GM18951 (cell line): ENCODE measurements at regions of chr13 and their contacts with region 1.

Region 1: GRCh38 chr13:49996951-49997895 is at the start of gene TRIM13:
- POLR2A ChIP-seq: peak; percentile 79

Region 2: DNA sequence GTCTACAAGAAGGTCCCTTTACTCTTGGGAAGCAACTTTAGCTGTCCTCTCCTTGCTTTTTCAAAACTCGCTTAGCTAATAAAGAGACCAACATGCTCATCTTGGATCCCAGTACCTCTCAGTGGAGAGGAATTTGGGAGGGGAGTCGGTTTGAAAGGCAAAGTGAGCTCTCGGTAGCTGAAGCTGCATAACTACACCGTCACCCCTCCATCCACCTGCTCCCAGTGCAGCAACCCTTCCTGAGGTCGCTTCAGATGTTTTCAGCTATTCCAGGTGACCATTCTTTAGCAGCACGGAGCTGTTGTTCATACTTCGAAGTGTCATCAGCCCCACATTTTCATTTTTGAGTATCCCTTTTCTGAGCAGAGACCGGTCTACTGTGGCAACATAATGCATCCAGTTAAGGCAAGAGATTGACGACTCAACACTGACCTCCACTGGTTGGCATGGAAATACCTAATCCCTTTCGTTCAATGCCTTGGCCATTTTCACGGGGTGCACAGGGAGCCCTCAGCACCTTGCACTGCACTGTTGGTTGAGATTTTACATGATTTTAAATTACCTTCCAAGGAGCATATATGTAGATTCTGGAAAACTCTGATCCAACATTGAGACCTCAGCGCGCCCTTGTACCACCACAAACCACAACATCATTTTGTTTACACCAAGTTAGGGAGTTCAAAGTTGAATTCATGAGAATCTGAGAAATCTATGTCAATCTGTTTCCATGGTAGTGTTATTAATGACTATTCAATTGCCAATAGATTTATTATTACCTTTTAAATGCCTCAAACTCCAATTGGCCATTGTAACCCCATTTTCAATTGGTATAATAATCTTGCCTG is 804.1 kb after region 1 on chr13:
- in situ Hi-C with region 1: loop called (anchors 25 kb)
- POLR2A ChIP-seq: no peak

Region 3: DNA sequence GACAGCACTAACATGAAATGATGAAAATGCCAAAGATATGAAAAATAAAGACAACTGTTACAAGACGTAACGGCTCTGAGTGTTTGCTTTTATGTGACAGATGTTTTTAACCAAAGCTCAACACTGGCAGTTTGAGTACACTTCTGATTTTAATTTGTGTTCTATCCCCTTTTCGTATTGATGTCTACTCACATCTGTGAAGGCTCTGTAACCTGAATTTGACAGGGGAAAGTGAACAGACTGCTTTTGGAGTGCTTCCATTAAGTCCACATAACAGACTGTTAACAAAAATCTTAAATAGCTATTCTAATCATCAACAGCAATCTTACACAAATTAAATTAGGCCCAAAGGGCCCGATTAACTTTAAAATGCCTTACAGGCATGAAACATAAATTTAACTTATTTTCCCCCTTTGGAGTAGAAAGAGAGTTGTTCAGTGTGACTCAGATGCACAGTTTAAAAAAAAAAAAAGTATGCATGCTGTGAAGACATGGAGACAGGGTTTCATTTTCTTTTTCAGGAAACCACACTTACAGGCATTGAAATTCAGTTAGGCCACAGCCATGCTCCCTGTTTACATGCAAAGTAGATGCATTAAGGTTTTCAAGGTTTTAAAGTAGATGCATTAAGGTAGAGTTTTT is 896.1 kb after region 1 on chr13:
- in situ Hi-C with region 1: no loop called
- POLR2A ChIP-seq: no peak

Region 4: GRCh38 chr13:50911937-50912795 is 914.9 kb after region 1 on chr13:
- in situ Hi-C with region 1: loop called (anchors 25 kb)
- POLR2A ChIP-seq: no peak